Activated CD8-positive, alpha-beta T cell treated with anti-CD3 and anti-CD28 coated beads, Interleukin-2, amount 10 ng/mL, durations not matched to agents 7 days and 5 days (primary cell): ENCODE measurements at regions of chr11 and their contacts with region 1.

Region 1: DNA sequence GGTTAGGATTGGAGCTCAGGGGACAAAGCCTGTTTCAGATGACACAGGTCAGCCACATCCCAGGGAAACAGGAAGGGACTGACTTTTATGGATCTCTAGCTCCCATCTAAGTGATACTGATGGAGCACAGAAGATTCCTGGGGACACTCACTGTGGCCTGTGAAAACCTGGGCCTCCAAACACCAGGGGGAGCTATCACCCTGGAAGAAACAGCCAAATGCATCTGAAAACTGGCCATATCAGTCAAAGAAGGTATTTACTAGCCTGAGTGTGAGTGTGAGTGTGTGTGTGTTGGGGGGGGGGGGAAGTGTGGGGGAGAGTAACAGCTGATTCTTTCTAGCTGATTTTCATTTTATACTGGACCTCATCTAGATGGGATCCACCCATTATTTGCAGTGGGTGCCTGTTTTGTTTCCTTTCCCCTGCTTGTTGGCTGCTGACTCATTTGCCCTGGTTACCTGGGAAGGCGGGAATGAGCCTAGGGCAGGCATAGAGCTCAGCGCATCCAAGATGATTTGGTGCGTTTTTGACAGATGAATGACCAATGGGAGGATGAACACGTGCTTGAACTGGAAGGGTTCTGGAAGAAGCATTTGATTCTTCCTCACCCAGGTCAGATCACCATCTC is 284.0 kb downstream of the KIRREL3 start:
- DNase-seq: peak; percentile 47
- ATAC-seq: no peak
- H3K4me3 Mint-ChIP-seq: no peak overlapping the region
- H3K27ac Mint-ChIP-seq: no peak overlapping the region
- H3K4me1 Mint-ChIP-seq: no peaks in the 10 kb centered on the region
- H3K27me3 Mint-ChIP-seq: peaks cover 7% of the 10 kb centered on the region

Region 2: GRCh38 chr11:126989942-126990715 is 273.6 kb after region 1 on chr11:
- CTCF ChIA-PET with region 1: interaction called, 25 read pairs
- POLR2A ChIA-PET with region 1: no interaction called
- DNase-seq: peak; percentile 66
- ATAC-seq: peak; percentile 81
- H3K4me3 Mint-ChIP-seq: no peak overlapping the region
- H3K27ac Mint-ChIP-seq: no peak overlapping the region
- H3K4me1 Mint-ChIP-seq: no peaks in the 10 kb centered on the region
- H3K27me3 Mint-ChIP-seq: peaks cover 7% of the 10 kb centered on the region